Heart right ventricle (tissue), 16 donors: ENCODE measurements at regions of chr11 and their contacts with region 1.

Region 1: DNA sequence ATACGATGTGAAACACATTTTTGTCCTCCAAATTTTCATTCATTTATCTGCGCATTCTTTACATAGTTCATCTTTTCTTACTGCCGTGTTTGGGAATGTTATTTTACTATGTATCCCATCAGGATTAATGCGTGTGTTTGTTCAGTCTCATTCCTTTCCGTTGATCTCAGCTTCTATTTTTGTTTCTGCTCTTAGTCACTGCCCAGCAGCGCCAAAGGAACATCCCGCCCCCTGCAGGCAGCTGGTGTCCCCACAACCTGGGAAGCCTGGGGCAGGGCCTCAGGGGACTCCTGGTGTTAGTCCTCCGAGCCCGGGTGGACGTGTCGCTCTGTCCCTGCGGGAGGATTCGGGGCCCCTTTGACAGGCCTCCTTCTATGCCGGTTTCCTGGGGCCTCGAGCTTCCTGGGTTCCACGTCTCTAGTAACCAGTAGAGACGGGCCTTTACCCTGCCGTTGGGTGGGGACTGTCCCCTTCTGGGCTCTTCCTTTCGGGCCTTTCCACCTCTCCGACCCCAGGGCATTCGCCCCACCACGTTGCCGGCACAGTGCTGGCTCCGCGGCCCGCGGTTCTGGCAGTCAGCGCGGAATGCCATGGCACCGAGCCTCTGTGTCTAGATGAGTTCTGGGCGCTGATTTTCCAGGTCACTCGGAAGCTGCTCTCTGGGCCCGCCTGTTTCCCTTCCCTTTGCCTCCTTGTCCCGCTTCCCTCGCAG is 39.8 kb downstream of the WEE1 start:
- DNase-seq: peak; percentile 94 to 96
- ATAC-seq: peak; percentile 91 to 96 (median 94)
- H3K4me3 ChIP-seq: peak overlapping the region; percentile 0 to 64 (median 56)
- H3K27ac ChIP-seq: peak overlapping the region; percentile 91 to 99 (median 96)
- H3K4me1 ChIP-seq: peaks cover 3 to 34% (median 24%) of the 10 kb centered on the region in 9 donors
- H3K27me3 ChIP-seq: no peaks in the 10 kb centered on the region
- CTCF ChIP-seq: peak; percentile 79 to 99 (median 96)

Region 2: GRCh38 chr11:9460322-9461067 is 152.8 kb before region 1 on chr11 and contains the start of gene ZNF143:
- intact Hi-C with region 1: loop called in 1 of 10 experiments (anchors 5 kb)
- DNase-seq: peak; percentile 100
- ATAC-seq: peak; percentile 94 to 98 (median 97)
- H3K4me3 ChIP-seq: peak within 1 kb of the TSS; percentile 71 to 99 (median 80)
- H3K27ac ChIP-seq: peak within 1 kb of the TSS; percentile 97 to 100 (median 98)
- H3K4me1 ChIP-seq: peaks cover 3 to 29% (median 21%) of the 10 kb centered on the region in 9 donors
- H3K27me3 ChIP-seq: no peaks in the 10 kb centered on the region
- CTCF ChIP-seq: no peak
- total RNA-seq, gene ZNF143: 11.7 to 28.8 (median 17.6) TPM

Region 3: GRCh38 chr11:9565822-9566560 is 47.3 kb before region 1 on chr11:
- intact Hi-C with region 1: loop called in 2 of 10 experiments (anchors 5 kb)
- DNase-seq: peak in 1 of 2 donors; percentile 57
- ATAC-seq: peak; percentile 48 to 93 (median 78)
- H3K4me3 ChIP-seq: no peak overlapping the region
- H3K27ac ChIP-seq: peak overlapping the region; percentile 77 to 94 (median 86)
- H3K4me1 ChIP-seq: peaks cover 9 to 49% (median 39%) of the 10 kb centered on the region in 9 donors
- H3K27me3 ChIP-seq: no peaks in the 10 kb centered on the region
- CTCF ChIP-seq: no peak

Region 4: DNA sequence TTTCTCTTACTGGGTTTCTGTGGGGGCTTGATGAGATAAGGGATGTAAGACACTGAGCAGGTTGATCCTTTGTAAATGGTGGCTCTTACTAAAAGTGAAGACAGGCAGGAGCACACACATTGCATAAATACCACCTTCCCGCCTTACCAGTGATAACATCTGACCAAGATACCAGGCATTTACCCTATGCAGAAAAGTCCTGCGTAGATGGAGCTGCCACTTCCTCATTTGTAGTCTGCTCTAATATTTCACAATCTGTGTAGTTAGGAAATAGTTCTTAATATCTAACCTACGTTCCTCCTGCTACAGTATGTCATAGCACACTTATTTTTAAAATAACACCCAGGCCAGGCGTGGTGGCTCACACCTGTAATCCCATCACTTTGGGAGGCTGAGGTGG is 26.7 kb after region 1 on chr11:
- intact Hi-C with region 1: no loop called
- DNase-seq: no peak
- ATAC-seq: peak in 7 of 8 donors; percentile 25 to 63 (median 47)
- H3K4me3 ChIP-seq: no peak overlapping the region
- H3K27ac ChIP-seq: peak overlapping the region in 6 of 10 donors; percentile 9 to 83 (median 58)
- H3K4me1 ChIP-seq: peaks cover 0 to 40% (median 15%) of the 10 kb centered on the region in 9 donors
- H3K27me3 ChIP-seq: no peaks in the 10 kb centered on the region
- CTCF ChIP-seq: no peak

Region 5: GRCh38 chr11:9663699-9664275 is 50.5 kb after region 1 on chr11 and contains the start of gene SWAP70:
- intact Hi-C with region 1: loop called in 6 of 10 experiments (anchors 1 to 5 kb)
- DNase-seq: peak; percentile 89 to 92
- ATAC-seq: peak; percentile 96 to 98 (median 97)
- H3K4me3 ChIP-seq: peak within 1 kb of the TSS; percentile 67 to 100 (median 88)
- H3K27ac ChIP-seq: peak within 1 kb of the TSS; percentile 87 to 98 (median 95)
- H3K4me1 ChIP-seq: peaks cover 0 to 36% (median 6%) of the 10 kb centered on the region in 9 donors
- H3K27me3 ChIP-seq: no peaks in the 10 kb centered on the region
- CTCF ChIP-seq: peak; percentile 24 to 63 (median 35)
- total RNA-seq, gene SWAP70: 15.9 to 33.4 (median 20.8) TPM

Region 6: GRCh38 chr11:9748361-9748970 is 135.2 kb after region 1 on chr11:
- intact Hi-C with region 1: loop called in 9 of 10 experiments (anchors 1 to 10 kb)
- DNase-seq: peak in 1 of 2 donors; percentile 63
- ATAC-seq: peak; percentile 64 to 88 (median 86)
- H3K4me3 ChIP-seq: no peak overlapping the region
- H3K27ac ChIP-seq: peak overlapping the region in 4 of 10 donors; percentile 17 to 51 (median 36)
- H3K4me1 ChIP-seq: peaks cover 0 to 25% (median 16%) of the 10 kb centered on the region in 9 donors
- H3K27me3 ChIP-seq: no peaks in the 10 kb centered on the region
- CTCF ChIP-seq: peak; percentile 53 to 79 (median 69)

Region 7: GRCh38 chr11:10322830-10323792 is 709.8 kb after region 1 on chr11:
- intact Hi-C with region 1: loop called in 2 of 10 experiments (anchors 10 kb)
- DNase-seq: peak in 1 of 2 donors; percentile 46
- ATAC-seq: peak; percentile 23 to 65 (median 59)
- H3K4me3 ChIP-seq: no peak overlapping the region
- H3K27ac ChIP-seq: peak overlapping the region in 5 of 10 donors; percentile 17 to 59 (median 25)
- H3K4me1 ChIP-seq: peaks cover 5 to 58% (median 34%) of the 10 kb centered on the region in 9 donors
- H3K27me3 ChIP-seq: no peaks in the 10 kb centered on the region
- CTCF ChIP-seq: peak; percentile 33 to 75 (median 62)